AG04449 (cell line): ENCODE measurements at regions of chr10 and their contacts with region 1.

Region 1: GRCh38 chr10:13074561-13075451 is 25.2 kb upstream of the OPTN start:
- DNase-seq: no peak
- H3K4me3 ChIP-seq: no peak overlapping the region
- CTCF ChIP-seq: peak; percentile 86

Region 2: DNA sequence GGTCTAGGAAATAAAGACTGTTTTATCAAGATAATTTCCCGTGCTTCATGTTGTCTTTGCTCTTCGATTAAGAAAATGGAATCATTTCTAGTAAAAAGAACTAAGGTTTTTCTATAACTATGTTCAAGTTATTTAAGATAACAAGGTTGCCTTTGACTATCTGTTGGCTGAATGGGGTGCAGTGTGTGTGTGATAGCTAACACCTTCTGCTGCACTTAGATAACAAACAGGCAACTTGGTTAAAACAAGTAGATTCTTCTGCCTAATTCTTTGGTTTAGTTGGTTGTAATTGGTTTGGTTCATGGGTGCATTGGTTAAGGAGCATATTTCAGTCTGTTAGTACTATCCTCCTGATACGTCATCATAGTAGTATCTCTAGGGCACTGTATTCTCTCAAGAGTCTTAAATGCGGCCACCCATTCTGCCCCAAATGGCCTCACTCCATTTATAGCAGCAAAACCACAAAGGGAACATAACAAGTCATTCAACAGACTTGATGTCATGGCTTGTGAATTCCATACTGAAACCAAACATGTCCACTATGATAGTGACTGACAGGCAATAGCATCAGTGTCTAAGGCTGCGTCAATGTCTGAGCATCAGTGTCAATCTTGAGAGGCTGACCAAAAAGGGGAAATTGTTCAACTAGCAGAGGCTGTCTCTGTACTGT is 129.0 kb before region 1 on chr10:
- CTCF ChIA-PET with region 1: no interaction called
- POLR2A ChIA-PET with region 1: no interaction called
- DNase-seq: no peak
- H3K4me3 ChIP-seq: no peak overlapping the region
- CTCF ChIP-seq: no peak

Region 3: GRCh38 chr10:13051126-13051694 is 23.6 kb before region 1 on chr10:
- CTCF ChIA-PET with region 1: interaction called, 11 read pairs
- POLR2A ChIA-PET with region 1: no interaction called
- DNase-seq: no peak
- H3K4me3 ChIP-seq: no peak overlapping the region
- CTCF ChIP-seq: no peak

Region 4: DNA sequence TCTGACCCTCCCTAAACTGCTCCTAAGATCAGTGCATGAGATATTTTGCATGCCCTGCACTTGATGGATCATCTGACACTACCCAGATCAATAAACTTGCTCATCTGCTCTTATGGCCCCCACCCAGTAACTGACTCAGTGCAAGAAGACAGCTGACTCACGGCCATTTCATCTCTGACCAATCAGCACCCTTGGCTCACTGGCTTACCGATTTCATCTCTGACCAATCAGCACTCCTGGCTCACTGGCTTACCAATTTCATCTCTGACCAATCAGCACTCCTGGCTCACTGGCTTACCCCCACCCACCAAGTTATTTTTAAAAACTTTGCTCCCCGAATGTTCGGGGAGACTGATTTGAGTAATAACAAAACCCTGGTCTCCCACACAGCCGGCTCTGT is 12.0 kb before region 1 on chr10:
- CTCF ChIA-PET with region 1: interaction called, 29 read pairs
- POLR2A ChIA-PET with region 1: no interaction called
- DNase-seq: no peak
- H3K4me3 ChIP-seq: no peak overlapping the region
- CTCF ChIP-seq: no peak

Region 5: DNA sequence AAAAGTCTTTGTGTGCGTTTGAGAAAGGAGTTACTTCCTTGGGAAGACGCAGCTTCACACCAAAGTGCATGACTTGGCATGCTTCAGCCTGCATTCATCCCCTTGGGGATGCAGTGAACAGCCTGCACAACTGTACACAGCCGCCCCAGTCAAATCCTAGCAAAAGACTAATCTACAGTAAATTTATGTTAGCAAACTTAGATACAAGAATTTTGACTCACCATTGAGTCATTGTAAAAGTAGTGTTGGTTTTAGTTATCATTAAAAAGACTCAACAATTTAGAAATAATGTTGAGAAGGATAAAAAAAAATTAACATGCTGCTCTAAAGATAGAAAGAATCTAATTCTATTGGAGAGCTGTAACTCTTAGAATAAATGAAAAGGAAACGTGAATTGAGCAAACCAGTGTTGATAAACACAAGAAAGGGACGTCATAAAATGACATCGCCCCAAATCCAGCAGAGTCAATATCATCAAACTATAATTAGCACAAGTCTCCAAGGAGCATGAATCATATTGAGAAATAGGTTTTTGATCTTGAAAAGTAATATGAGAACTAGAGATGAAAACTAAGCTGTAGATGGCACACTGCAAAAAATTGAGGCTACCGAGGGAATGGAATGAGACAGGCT is 13.3 kb after region 1 on chr10:
- CTCF ChIA-PET with region 1: interaction called, 31 read pairs
- POLR2A ChIA-PET with region 1: no interaction called
- DNase-seq: peak; percentile 51
- H3K4me3 ChIP-seq: no peak overlapping the region
- CTCF ChIP-seq: no peak

Region 6: DNA sequence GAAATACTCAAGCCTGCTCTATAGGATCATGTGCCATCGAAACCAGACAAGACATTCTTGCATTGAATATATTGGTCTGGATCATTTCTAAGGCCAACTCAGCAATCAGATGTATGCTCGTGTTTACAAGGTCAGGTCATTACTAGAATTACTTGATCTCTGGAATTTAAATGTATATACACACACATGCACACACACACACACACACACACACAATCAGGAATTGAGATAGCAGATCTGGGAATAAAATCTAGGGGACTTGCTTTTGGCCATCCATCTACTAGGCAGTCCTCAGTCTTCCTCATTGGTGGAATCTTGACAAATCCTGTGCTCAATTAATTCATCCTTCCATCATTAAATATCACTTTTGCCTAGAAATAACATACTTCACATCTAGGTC is 28.7 kb after region 1 on chr10:
- CTCF ChIA-PET with region 1: no interaction called
- POLR2A ChIA-PET with region 1: no interaction called
- DNase-seq: no peak
- H3K4me3 ChIP-seq: no peak overlapping the region
- CTCF ChIP-seq: no peak